ENCODE measurements at regions of chr17 and their contacts with region 1.

Region 1: GRCh38 chr17:20226814-20227482 is 217.8 kb downstream of the SPECC1 start:
- DNase-seq: peak; percentile 56 to 85 (median 71)
- ATAC-seq: peak; percentile 88 to 100 (median 98)
- H3K4me3 ChIP-seq: no peak overlapping the region
- H3K4me3 Mint-ChIP-seq: peak overlapping the region in 1 of 3 donors; percentile 17
- H3K27ac ChIP-seq: no peak overlapping the region
- H3K27ac Mint-ChIP-seq: no peak overlapping the region
- H3K4me1 ChIP-seq: peaks cover 4 to 9% of the 10 kb centered on the region in 2 experiments
- H3K4me1 Mint-ChIP-seq: peaks cover 8 to 22% (median 18%) of the 10 kb centered on the region in 3 donors
- H3K27me3 ChIP-seq: peaks cover 0 to 6% of the 10 kb centered on the region in 2 experiments
- H3K27me3 Mint-ChIP-seq: no peaks in the 10 kb centered on the region

Region 2: DNA sequence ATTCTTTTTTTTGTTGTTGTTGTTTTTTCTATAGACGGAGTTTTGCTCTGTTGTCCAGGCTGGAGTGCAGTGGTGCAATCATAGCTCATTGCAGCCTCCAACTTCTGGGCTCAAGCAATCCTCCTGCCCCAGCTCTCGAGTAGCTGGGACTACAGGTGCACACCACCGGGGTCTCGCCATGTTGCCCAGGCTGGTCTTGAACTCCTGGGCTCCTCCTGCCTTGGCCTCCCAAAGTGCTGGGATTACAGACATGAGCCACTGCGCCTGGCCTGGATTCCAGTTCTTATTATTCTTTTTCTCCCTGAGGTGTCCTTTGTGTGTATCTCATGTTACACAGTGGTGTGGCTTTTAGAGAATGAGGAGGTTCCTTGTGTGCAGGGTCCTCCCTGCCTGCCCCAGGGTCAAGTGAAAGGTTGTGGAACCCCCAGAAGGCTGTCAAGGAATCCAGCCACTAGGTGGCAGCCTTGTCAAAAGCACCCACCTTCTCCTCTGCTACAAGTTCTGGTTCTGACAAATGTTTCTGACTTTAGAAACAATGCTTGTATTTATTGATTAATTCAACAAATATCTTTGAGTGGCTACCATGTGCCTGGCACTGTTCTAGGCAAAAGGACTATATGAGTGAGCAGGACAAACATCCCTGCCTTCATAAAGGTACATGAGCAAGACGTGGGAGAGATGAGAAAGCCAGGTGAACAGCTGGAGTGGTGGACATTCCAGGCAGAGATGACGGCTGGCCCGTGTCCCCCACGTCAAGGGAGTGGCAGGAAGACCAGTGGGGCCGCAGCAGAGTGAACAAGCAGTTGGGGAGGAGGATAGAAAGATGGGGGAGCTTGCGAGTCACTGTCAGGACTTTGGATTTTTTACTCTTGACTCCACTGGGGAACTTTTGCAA is 105.3 kb before region 1 on chr17:
- CTCF ChIA-PET with region 1: interaction called in 1 of 2 experiments, 10 read pairs
- POLR2A ChIA-PET with region 1: no interaction called
- DNase-seq: peak; percentile 17 to 84 (median 58)
- ATAC-seq: peak; percentile 57 to 75 (median 68)
- H3K4me3 ChIP-seq: no peak overlapping the region
- H3K4me3 Mint-ChIP-seq: no peak overlapping the region
- H3K27ac ChIP-seq: no peak overlapping the region
- H3K27ac Mint-ChIP-seq: no peak overlapping the region
- H3K4me1 ChIP-seq: no peaks in the 10 kb centered on the region
- H3K4me1 Mint-ChIP-seq: peaks cover 0 to 2% (median 0%) of the 10 kb centered on the region in 3 donors
- H3K27me3 ChIP-seq: peaks cover 0 to 3% of the 10 kb centered on the region in 2 experiments
- H3K27me3 Mint-ChIP-seq: peaks cover 0 to 5% of the 10 kb centered on the region in 2 donors

Region 3: DNA sequence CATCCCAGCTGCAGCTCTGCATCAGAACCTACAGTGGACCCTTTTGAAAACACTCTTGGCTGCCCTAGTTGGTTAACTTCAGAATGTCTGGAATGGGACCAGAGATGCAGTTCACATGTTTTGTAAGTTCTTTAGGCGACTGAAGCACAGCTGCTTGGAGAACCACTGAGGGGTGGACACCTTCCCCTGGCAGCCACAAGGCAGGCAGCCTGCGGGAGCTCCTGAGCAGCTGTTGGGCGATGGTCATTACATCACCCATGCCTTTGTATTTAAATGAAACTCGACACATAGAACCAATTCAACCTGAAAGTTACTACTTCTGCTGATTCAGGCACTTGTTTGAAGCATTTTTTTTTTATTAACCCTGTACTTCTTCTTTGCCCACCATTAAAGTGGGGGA is 88.9 kb after region 1 on chr17:
- CTCF ChIA-PET with region 1: interaction called, 9 to 10 read pairs
- POLR2A ChIA-PET with region 1: no interaction called
- DNase-seq: no peak
- ATAC-seq: no peak
- H3K4me3 ChIP-seq: no peak overlapping the region
- H3K4me3 Mint-ChIP-seq: no peak overlapping the region
- H3K27ac ChIP-seq: no peak overlapping the region
- H3K27ac Mint-ChIP-seq: no peak overlapping the region
- H3K4me1 ChIP-seq: peaks cover 0 to 11% of the 10 kb centered on the region in 2 experiments
- H3K4me1 Mint-ChIP-seq: no peaks in the 10 kb centered on the region
- H3K27me3 ChIP-seq: no peaks in the 10 kb centered on the region
- H3K27me3 Mint-ChIP-seq: no peaks in the 10 kb centered on the region